Naive thymus-derived CD4-positive, alpha-beta T cell (primary cell): ENCODE measurements at regions of chr4 and their contacts with region 1.

Region 1: DNA sequence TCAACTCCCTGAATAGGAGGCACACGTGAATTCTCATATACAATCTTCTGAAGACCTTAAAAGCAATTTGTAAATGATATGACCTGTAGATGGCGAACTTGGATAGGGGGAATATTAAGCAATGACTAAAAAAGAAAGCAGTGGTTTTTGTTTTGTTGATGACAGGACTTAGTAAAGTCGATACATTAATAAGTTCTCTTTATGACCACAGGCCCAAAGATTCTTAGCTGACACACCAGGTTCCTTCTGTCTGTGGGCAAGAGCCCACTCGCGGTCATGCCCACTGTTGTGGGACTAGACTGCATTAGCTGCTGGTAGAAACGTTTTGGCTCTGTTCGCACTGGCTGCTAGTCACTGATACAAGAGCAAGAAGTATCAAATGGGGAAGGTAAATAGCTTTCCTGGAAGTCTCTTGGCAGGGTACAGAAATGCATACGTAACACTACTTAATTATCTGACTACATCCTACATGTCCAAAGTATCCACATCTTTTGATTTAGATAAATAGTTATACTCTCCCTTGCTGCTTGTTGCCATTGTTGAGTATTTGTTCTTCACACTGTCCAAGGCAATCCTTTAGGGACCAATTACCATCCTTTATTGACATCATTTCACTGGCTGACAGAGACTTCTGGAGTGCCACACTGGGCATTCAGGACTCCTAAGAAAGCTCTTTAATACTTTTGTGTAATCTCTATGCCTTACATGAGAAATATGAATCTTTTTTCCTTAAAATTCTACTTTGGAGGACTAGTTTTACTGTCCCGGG is 31.0 kb downstream of the ALPK1 start:
- DNase-seq: peak in 4 of 9 donors; percentile 21 to 27 (median 24)
- ATAC-seq: peak; percentile 60
- H3K4me3 ChIP-seq: no peak overlapping the region
- H3K4me3 Mint-ChIP-seq: no peak overlapping the region
- H3K27ac ChIP-seq: no peak overlapping the region
- H3K27ac Mint-ChIP-seq: no peak overlapping the region
- H3K4me1 ChIP-seq: no peaks in the 10 kb centered on the region
- H3K4me1 Mint-ChIP-seq: peaks cover 0 to 9% (median under 1%) of the 10 kb centered on the region in 7 donors
- H3K27me3 ChIP-seq: no peaks in the 10 kb centered on the region
- H3K27me3 Mint-ChIP-seq: no peaks in the 10 kb centered on the region

Region 2: GRCh38 chr4:110869862-110870572 is 1458.1 kb before region 1 on chr4:
- CTCF ChIA-PET with region 1: no interaction called
- POLR2A ChIA-PET with region 1: no interaction called
- intact Hi-C with region 1: no loop called
- DNase-seq: no peak
- ATAC-seq: no peak
- H3K4me3 ChIP-seq: no peak overlapping the region
- H3K4me3 Mint-ChIP-seq: no peak overlapping the region
- H3K27ac ChIP-seq: no peak overlapping the region
- H3K27ac Mint-ChIP-seq: no peak overlapping the region
- H3K4me1 ChIP-seq: no peaks in the 10 kb centered on the region
- H3K4me1 Mint-ChIP-seq: peaks cover 0 to 4% (median 0%) of the 10 kb centered on the region in 7 donors
- H3K27me3 ChIP-seq: no peaks in the 10 kb centered on the region
- H3K27me3 Mint-ChIP-seq: no peaks in the 10 kb centered on the region

Region 3: GRCh38 chr4:112185334-112185733 is 142.8 kb before region 1 on chr4:
- CTCF ChIA-PET with region 1: no interaction called
- POLR2A ChIA-PET with region 1: no interaction called
- intact Hi-C with region 1: no loop called
- DNase-seq: no peak
- ATAC-seq: no peak
- H3K4me3 ChIP-seq: no peak overlapping the region
- H3K4me3 Mint-ChIP-seq: no peak overlapping the region
- H3K27ac ChIP-seq: no peak overlapping the region
- H3K27ac Mint-ChIP-seq: peak overlapping the region in 1 of 9 donors; percentile 38
- H3K4me1 ChIP-seq: peaks cover 0 to 17% of the 10 kb centered on the region in 2 donors
- H3K4me1 Mint-ChIP-seq: peaks cover 20 to 46% (median 37%) of the 10 kb centered on the region in 7 donors
- H3K27me3 ChIP-seq: no peaks in the 10 kb centered on the region
- H3K27me3 Mint-ChIP-seq: no peaks in the 10 kb centered on the region

Region 4: DNA sequence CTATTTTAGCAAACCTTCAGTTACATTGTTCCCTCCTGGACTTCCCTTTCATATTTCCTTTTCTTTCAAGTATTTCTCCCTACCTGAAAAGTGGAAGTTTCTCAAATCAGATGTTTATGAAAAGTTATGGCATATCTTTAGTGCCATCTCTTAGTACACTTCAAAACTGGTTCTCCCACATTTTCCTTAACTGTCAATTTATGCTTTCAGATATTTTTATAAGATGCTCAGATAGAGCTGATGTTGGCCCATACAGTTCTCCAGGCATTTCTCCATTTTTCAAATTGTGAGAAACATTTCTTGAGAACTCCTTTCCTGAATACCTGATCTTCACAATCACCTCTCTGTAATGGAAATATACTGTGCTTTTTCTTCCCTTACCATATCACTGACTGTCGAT is 129.1 kb before region 1 on chr4:
- CTCF ChIA-PET with region 1: no interaction called
- POLR2A ChIA-PET with region 1: no interaction called
- intact Hi-C with region 1: no loop called
- DNase-seq: no peak
- ATAC-seq: no peak
- H3K4me3 ChIP-seq: no peak overlapping the region
- H3K4me3 Mint-ChIP-seq: no peak overlapping the region
- H3K27ac ChIP-seq: no peak overlapping the region
- H3K27ac Mint-ChIP-seq: no peak overlapping the region
- H3K4me1 ChIP-seq: no peaks in the 10 kb centered on the region
- H3K4me1 Mint-ChIP-seq: peaks cover 0 to 15% (median 0%) of the 10 kb centered on the region in 7 donors
- H3K27me3 ChIP-seq: no peaks in the 10 kb centered on the region
- H3K27me3 Mint-ChIP-seq: no peaks in the 10 kb centered on the region

Region 5: GRCh38 chr4:112938461-112939058 is 610.4 kb after region 1 on chr4:
- CTCF ChIA-PET with region 1: no interaction called
- POLR2A ChIA-PET with region 1: no interaction called
- intact Hi-C with region 1: loop called in 1 of 2 experiments (anchors 5 kb)
- DNase-seq: peak in 3 of 9 donors; percentile 3 to 14 (median 4)
- ATAC-seq: no peak
- H3K4me3 ChIP-seq: no peak overlapping the region
- H3K4me3 Mint-ChIP-seq: no peak overlapping the region
- H3K27ac ChIP-seq: no peak overlapping the region
- H3K27ac Mint-ChIP-seq: no peak overlapping the region
- H3K4me1 ChIP-seq: no peaks in the 10 kb centered on the region
- H3K4me1 Mint-ChIP-seq: no peaks in the 10 kb centered on the region
- H3K27me3 ChIP-seq: no peaks in the 10 kb centered on the region
- H3K27me3 Mint-ChIP-seq: peaks cover 9 to 26% (median 23%) of the 10 kb centered on the region in 5 donors

Region 6: GRCh38 chr4:112951362-112952312 is 623.5 kb after region 1 on chr4:
- CTCF ChIA-PET with region 1: no interaction called
- POLR2A ChIA-PET with region 1: no interaction called
- intact Hi-C with region 1: loop called in 1 of 2 experiments (anchors 10 kb)
- DNase-seq: peak in 1 of 9 donors; percentile 8
- ATAC-seq: no peak
- H3K4me3 ChIP-seq: no peak overlapping the region
- H3K4me3 Mint-ChIP-seq: no peak overlapping the region
- H3K27ac ChIP-seq: no peak overlapping the region
- H3K27ac Mint-ChIP-seq: no peak overlapping the region
- H3K4me1 ChIP-seq: no peaks in the 10 kb centered on the region
- H3K4me1 Mint-ChIP-seq: peaks cover 0 to 2% (median 0%) of the 10 kb centered on the region in 7 donors
- H3K27me3 ChIP-seq: no peaks in the 10 kb centered on the region
- H3K27me3 Mint-ChIP-seq: peaks cover 5 to 29% (median 7%) of the 10 kb centered on the region in 5 donors